ENCODE measurements at regions of chr2 and their contacts with region 1.

Region 1: GRCh38 chr2:192162392-192163042 is 32.2 kb downstream of the TMEFF2 start:
- DNase-seq: peak; percentile 58
- H3K4me3 ChIP-seq: no peak overlapping the region
- H3K27ac ChIP-seq: no peak overlapping the region
- H3K27me3 ChIP-seq: no peaks in the 10 kb centered on the region
- CTCF ChIP-seq: peak; percentile 93

Region 2: GRCh38 chr2:190627448-190628412 is 1534.8 kb before region 1 on chr2:
- CTCF ChIA-PET with region 1: no interaction called
- POLR2A ChIA-PET with region 1: no interaction called
- DNase-seq: no peak
- H3K4me3 ChIP-seq: peak overlapping the region; percentile 50
- H3K27ac ChIP-seq: no peak overlapping the region
- H3K27me3 ChIP-seq: no peaks in the 10 kb centered on the region
- CTCF ChIP-seq: no peak

Region 3: DNA sequence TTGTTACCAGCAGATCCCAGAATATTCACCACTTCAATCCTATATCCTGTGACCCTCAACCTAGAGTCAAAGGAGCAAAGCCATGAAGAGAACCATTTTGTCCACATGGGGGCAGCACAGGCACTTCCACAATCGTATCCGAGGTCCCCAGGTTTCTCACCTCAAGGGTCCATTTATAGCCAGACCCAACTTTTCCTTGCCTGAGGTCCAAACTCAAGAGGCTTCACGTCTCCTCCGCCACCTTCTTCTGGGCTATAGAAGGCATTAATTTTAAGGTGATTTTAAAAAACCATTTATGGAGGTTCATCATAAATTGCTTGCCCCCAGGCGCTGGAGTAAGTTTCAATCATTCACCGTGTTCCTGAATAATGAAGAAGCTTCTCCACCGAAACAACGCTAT is 596.2 kb before region 1 on chr2:
- CTCF ChIA-PET with region 1: interaction called, 29 read pairs
- POLR2A ChIA-PET with region 1: no interaction called
- DNase-seq: peak; percentile 26
- H3K4me3 ChIP-seq: no peak overlapping the region
- H3K27ac ChIP-seq: no peak overlapping the region
- H3K27me3 ChIP-seq: no peaks in the 10 kb centered on the region
- CTCF ChIP-seq: peak; percentile 91

Region 4: GRCh38 chr2:191806396-191806795 is 356.1 kb before region 1 on chr2:
- CTCF ChIA-PET with region 1: interaction called, 533 read pairs
- POLR2A ChIA-PET with region 1: interaction called, 9 read pairs
- DNase-seq: no peak
- H3K4me3 ChIP-seq: no peak overlapping the region
- H3K27ac ChIP-seq: no peak overlapping the region
- H3K27me3 ChIP-seq: no peaks in the 10 kb centered on the region
- CTCF ChIP-seq: no peak

Region 5: DNA sequence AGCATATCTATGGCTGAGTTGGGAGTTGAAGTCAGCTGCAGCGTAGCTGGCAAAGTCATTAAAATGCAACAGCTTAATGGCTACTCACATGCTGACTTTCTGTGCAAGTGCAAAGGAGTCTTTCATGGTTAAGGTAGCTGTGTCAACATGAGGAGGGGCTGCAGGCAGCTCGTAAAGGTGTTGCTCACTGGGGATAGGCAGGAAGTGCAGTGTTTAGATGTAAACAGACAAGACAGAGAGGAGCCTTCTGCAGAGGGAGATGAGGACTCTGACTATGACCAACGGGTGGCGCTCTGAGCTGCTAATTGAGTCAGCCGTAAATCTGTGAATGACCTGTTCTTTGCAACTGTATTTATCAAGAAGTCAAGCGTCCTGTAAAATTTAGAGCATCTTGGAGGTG is 293.3 kb before region 1 on chr2:
- CTCF ChIA-PET with region 1: interaction called, 41 read pairs
- POLR2A ChIA-PET with region 1: no interaction called
- DNase-seq: no peak
- H3K4me3 ChIP-seq: no peak overlapping the region
- H3K27ac ChIP-seq: no peak overlapping the region
- H3K27me3 ChIP-seq: no peaks in the 10 kb centered on the region
- CTCF ChIP-seq: no peak

Region 6: GRCh38 chr2:191910518-191910917 is 252.0 kb before region 1 on chr2:
- CTCF ChIA-PET with region 1: no interaction called
- POLR2A ChIA-PET with region 1: no interaction called
- DNase-seq: peak; percentile 37
- H3K4me3 ChIP-seq: no peak overlapping the region
- H3K27ac ChIP-seq: no peak overlapping the region
- H3K27me3 ChIP-seq: no peaks in the 10 kb centered on the region
- CTCF ChIP-seq: no peak

Region 7: DNA sequence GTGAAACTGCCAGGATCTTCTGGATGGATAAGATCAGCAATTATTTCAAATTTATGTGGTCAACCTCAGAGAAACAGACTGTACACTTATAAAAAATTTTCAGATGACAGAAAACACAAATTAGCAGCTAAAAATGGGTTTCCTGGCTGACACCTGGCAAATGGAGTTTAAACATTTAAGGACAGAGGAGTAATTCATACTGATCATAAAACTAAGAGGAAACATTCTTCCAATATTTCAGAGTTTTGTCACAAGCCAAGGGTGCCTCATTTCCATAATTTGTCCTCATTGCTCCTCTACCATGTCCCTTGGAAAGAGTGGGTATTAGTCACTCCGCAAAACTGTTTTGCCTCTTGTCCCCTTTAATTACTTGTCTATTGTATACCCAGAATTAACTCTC is 37.9 kb before region 1 on chr2:
- CTCF ChIA-PET with region 1: interaction called, 10 read pairs
- POLR2A ChIA-PET with region 1: no interaction called
- DNase-seq: no peak
- H3K4me3 ChIP-seq: no peak overlapping the region
- H3K27ac ChIP-seq: no peak overlapping the region
- H3K27me3 ChIP-seq: no peaks in the 10 kb centered on the region
- CTCF ChIP-seq: no peak

Region 8: GRCh38 chr2:192194866-192195547 is 32.5 kb after region 1 on chr2 and contains the start of gene TMEFF2:
- CTCF ChIA-PET with region 1: interaction called, 16 read pairs
- POLR2A ChIA-PET with region 1: no interaction called
- DNase-seq: peak; percentile 66
- H3K4me3 ChIP-seq: peak within 1 kb of the TSS; percentile 77
- H3K27ac ChIP-seq: no peak within 1 kb of the TSS
- H3K27me3 ChIP-seq: peaks cover 3% of the 10 kb centered on the region
- CTCF ChIP-seq: peak; percentile 47
- polyA plus RNA-seq, gene TMEFF2: 3.4 and 4.1 TPM in 2 replicates

Measured in AG04450 (cell line).